HCT116 (cell line): ENCODE measurements at regions of chr17 and their contacts with region 1.

Region 1: DNA sequence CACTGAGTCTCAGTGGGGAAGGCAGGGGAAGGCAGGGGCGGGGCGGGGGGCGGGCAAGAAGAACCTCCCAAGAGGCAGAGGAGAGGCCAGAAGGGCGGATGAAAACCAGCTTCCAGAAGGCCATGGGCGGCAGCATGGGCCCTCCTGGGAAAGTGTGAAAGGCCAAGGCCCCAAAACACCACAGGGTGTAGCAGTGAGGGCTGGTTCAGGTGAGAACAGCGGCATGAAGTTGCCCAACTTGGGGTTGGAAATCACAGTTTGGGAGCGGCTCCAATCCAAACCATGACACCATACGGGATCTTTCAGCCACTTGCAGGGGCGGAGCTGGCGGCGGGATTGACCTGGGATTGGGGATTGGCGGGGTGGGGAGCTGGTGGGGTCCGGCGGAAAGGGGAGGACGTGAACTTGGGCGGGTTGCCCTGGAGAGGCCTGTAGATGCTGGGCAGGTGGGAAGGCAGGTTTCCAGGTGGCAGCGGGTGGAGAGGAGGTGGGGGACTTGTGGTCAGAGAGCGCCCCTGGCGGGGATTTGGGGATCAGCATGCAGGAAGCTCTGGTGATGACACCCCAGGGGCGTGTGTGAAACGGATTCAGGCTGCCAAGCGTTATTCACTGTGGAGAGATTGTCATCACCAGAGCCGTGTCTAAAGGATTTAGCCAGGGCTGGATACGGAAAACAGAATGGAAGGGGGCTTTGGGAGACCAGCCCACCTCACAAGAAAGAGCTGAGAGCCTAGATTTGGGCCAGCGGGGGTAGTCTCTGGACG is 80.9 kb downstream of the ARHGAP23 start:
- DNase-seq: peak; percentile 65
- ATAC-seq: peak; percentile 89
- H3K4me3 ChIP-seq: no peak overlapping the region
- H3K27ac ChIP-seq: no peak overlapping the region
- H3K4me1 ChIP-seq: peaks cover 0 to 22% of the 10 kb centered on the region in 2 experiments; a peak in 2 of 4 replicates
- H3K27me3 ChIP-seq: no peaks in the 10 kb centered on the region
- CTCF ChIP-seq: peak; percentile 53 to 91 (median 81); a peak in 5 of 6 replicates
- POLR2A ChIP-seq: no peak
- RAD21 ChIP-seq: peak; percentile 52

Region 2: GRCh38 chr17:38421871-38422827 is 87.0 kb before region 1 on chr17:
- CTCF ChIA-PET with region 1: interaction called, 13 read pairs
- POLR2A ChIA-PET with region 1: no interaction called
- RAD21 ChIA-PET with region 1: interaction called in 1 of 2 experiments, 3 read pairs
- intact Hi-C with region 1: no loop called
- DNase-seq: no peak
- ATAC-seq: no peak
- H3K4me3 ChIP-seq: no peak overlapping the region
- H3K27ac ChIP-seq: no peak overlapping the region
- H3K4me1 ChIP-seq: peaks cover 5 to 17% of the 10 kb centered on the region in 2 experiments; a peak in 3 of 4 replicates
- H3K27me3 ChIP-seq: no peaks in the 10 kb centered on the region
- CTCF ChIP-seq: no peak
- POLR2A ChIP-seq: no peak
- RAD21 ChIP-seq: no peak

Region 3: DNA sequence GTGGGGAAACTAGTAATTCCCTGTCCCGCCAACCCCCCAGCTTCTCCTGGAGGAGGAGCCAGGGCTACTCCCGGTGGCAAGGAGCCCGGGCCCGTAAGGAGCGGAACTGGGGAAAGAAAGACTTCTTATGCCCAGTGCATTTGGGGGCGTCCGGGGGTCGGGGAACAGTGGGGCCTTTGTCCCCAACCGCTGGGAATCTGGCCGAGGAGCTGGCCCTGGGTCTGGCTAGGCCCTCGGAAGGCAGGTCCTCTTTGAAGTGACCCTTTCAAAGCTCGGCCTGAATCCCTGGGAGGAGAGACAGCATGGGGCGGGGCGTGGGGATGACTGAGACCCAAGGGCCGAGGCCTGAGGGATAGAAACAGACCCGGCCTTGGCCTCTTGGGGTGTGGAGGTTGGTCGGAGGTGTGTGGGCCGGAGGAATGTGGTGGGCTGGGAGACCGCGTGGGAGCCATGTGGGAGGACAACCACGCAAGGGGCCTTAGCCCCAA is 75.0 kb before region 1 on chr17:
- CTCF ChIA-PET with region 1: no interaction called
- POLR2A ChIA-PET with region 1: no interaction called
- RAD21 ChIA-PET with region 1: no interaction called
- intact Hi-C with region 1: no loop called
- DNase-seq: no peak
- ATAC-seq: no peak
- H3K4me3 ChIP-seq: no peak overlapping the region
- H3K27ac ChIP-seq: no peak overlapping the region
- H3K4me1 ChIP-seq: peaks cover 8 to 12% of the 10 kb centered on the region in 2 experiments
- H3K27me3 ChIP-seq: no peaks in the 10 kb centered on the region
- CTCF ChIP-seq: no peak
- POLR2A ChIP-seq: no peak
- RAD21 ChIP-seq: no peak